PC-9 (cell line): ENCODE measurements at regions of chr6 and their contacts with region 1.

Region 1: GRCh38 chr6:121236984-121237383 is 97.3 kb downstream of the TBC1D32 start:
- DNase-seq: no peak
- H3K4me3 ChIP-seq: no peak overlapping the region
- H3K27ac ChIP-seq: no peak overlapping the region
- H3K4me1 ChIP-seq: no peaks in the 10 kb centered on the region
- H3K27me3 ChIP-seq: no peaks in the 10 kb centered on the region
- CTCF ChIP-seq: 0 out of 2 replicates have a peak, but pooled peaks have one; percentile 23

Region 2: GRCh38 chr6:121187200-121188145 is 49.5 kb before region 1 on chr6:
- CTCF ChIA-PET with region 1: no interaction called
- POLR2A ChIA-PET with region 1: no interaction called
- intact Hi-C with region 1: loop called (anchors 1 kb)
- DNase-seq: peak in 1 of 2 experiments; percentile 97
- H3K4me3 ChIP-seq: no peak overlapping the region
- H3K27ac ChIP-seq: peak overlapping the region; percentile 58
- H3K4me1 ChIP-seq: peaks cover 33% of the 10 kb centered on the region
- H3K27me3 ChIP-seq: no peaks in the 10 kb centered on the region
- CTCF ChIP-seq: no peak